Activated CD4-positive, alpha-beta memory T cell treated with anti-CD3 and anti-CD28 coated beads, Interleukin-2, amount 10 ng/mL, durations not matched to agents 7 days and 5 days (primary cell): ENCODE measurements at regions of chr11 and their contacts with region 1.

Region 1: GRCh38 chr11:82900277-82901164 is at the start of gene PRCP:
- DNase-seq: peak; percentile 94
- H3K4me3 Mint-ChIP-seq: peak within 1 kb of the TSS; percentile 97
- H3K27ac Mint-ChIP-seq: peak within 1 kb of the TSS; percentile 100
- H3K4me1 Mint-ChIP-seq: peaks cover 43% of the 10 kb centered on the region
- H3K27me3 Mint-ChIP-seq: no peaks in the 10 kb centered on the region
- total RNA-seq, gene PRCP: 24.5 to 30.1 TPM

Region 2: GRCh38 chr11:82533628-82534327 is 366.7 kb before region 1 on chr11:
- CTCF ChIA-PET with region 1: no interaction called
- POLR2A ChIA-PET with region 1: no interaction called
- DNase-seq: no peak
- H3K4me3 Mint-ChIP-seq: no peak overlapping the region
- H3K27ac Mint-ChIP-seq: no peak overlapping the region
- H3K4me1 Mint-ChIP-seq: no peaks in the 10 kb centered on the region
- H3K27me3 Mint-ChIP-seq: no peaks in the 10 kb centered on the region

Region 3: DNA sequence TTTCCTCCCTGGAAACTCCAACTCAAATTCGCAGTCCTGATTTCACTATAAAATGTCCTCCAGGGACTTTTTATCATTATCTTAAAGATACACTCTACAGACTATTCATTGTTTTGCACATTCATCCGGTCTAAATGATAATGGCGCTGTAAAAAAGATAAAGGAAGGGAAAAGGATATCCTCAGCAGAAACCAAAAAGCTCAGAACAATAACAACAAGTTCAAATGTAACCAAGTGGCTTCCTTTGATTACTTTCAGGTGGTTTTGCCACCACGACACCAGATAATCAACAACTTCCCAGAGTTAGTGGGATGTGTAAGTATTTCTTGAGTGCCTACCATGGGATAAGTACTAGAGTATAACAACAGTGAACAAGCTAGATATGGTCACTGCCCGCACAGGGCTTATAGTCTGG is 26.6 kb before region 1 on chr11:
- CTCF ChIA-PET with region 1: interaction called, 71 read pairs
- POLR2A ChIA-PET with region 1: interaction called, 18 read pairs
- DNase-seq: no peak
- H3K4me3 Mint-ChIP-seq: no peak overlapping the region
- H3K27ac Mint-ChIP-seq: peak overlapping the region; percentile 56
- H3K4me1 Mint-ChIP-seq: peaks cover 26% of the 10 kb centered on the region
- H3K27me3 Mint-ChIP-seq: no peaks in the 10 kb centered on the region

Region 4: GRCh38 chr11:83063073-83063754 is 162.7 kb after region 1 on chr11:
- CTCF ChIA-PET with region 1: no interaction called
- POLR2A ChIA-PET with region 1: interaction called, 14 read pairs
- DNase-seq: no peak
- H3K4me3 Mint-ChIP-seq: peak overlapping the region; percentile 74
- H3K27ac Mint-ChIP-seq: peak overlapping the region; percentile 96
- H3K4me1 Mint-ChIP-seq: peaks cover 30% of the 10 kb centered on the region
- H3K27me3 Mint-ChIP-seq: no peaks in the 10 kb centered on the region

Region 5: GRCh38 chr11:83162377-83162776 is 261.9 kb after region 1 on chr11:
- CTCF ChIA-PET with region 1: interaction called, 20 read pairs
- POLR2A ChIA-PET with region 1: interaction called, 124 read pairs
- DNase-seq: no peak
- H3K4me3 Mint-ChIP-seq: peak overlapping the region; percentile 57
- H3K27ac Mint-ChIP-seq: no peak overlapping the region
- H3K4me1 Mint-ChIP-seq: peaks cover 61% of the 10 kb centered on the region
- H3K27me3 Mint-ChIP-seq: no peaks in the 10 kb centered on the region

Region 6: GRCh38 chr11:83285771-83286528 is 385.4 kb after region 1 on chr11 and contains the start of gene CCDC90B:
- CTCF ChIA-PET with region 1: interaction called, 6 read pairs
- POLR2A ChIA-PET with region 1: interaction called, 35 read pairs
- DNase-seq: peak; percentile 95
- H3K4me3 Mint-ChIP-seq: peak within 1 kb of the TSS; percentile 92
- H3K27ac Mint-ChIP-seq: peak within 1 kb of the TSS; percentile 97
- H3K4me1 Mint-ChIP-seq: peaks cover 33% of the 10 kb centered on the region
- H3K27me3 Mint-ChIP-seq: no peaks in the 10 kb centered on the region
- total RNA-seq, gene CCDC90B: 29.7 to 31.5 TPM